ENCODE measurements at regions of chr18 and their contacts with region 1.

Region 1: DNA sequence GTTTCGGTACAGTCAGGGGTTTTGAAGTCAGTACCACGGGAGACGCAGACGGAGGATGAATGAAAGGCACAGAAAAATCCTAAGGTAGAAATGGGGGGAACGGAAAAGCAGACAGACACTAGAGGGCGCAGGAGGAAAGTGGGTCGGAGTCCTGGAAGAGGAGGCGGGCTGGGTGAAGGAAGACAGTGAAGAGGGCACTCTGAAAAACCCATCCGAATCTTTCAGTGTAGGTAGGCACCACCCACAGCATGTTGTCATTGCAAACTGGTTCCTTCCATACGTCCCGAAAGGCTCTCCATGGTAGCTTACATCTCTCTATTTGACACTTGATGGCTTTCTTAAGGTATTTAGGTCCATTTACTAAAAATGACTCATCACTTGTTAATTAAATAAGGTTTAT is 18.5 kb upstream of the ZNF236 start:
- DNase-seq: peak; percentile 82
- H3K4me3 ChIP-seq: no peak overlapping the region
- H3K27ac ChIP-seq: no peak overlapping the region
- H3K4me1 ChIP-seq: peaks cover 9% of the 10 kb centered on the region
- H3K27me3 ChIP-seq: no peaks in the 10 kb centered on the region
- CTCF ChIP-seq: peak; percentile 39 to 82 (median 56)
- POLR2A ChIP-seq: no peak

Region 2: DNA sequence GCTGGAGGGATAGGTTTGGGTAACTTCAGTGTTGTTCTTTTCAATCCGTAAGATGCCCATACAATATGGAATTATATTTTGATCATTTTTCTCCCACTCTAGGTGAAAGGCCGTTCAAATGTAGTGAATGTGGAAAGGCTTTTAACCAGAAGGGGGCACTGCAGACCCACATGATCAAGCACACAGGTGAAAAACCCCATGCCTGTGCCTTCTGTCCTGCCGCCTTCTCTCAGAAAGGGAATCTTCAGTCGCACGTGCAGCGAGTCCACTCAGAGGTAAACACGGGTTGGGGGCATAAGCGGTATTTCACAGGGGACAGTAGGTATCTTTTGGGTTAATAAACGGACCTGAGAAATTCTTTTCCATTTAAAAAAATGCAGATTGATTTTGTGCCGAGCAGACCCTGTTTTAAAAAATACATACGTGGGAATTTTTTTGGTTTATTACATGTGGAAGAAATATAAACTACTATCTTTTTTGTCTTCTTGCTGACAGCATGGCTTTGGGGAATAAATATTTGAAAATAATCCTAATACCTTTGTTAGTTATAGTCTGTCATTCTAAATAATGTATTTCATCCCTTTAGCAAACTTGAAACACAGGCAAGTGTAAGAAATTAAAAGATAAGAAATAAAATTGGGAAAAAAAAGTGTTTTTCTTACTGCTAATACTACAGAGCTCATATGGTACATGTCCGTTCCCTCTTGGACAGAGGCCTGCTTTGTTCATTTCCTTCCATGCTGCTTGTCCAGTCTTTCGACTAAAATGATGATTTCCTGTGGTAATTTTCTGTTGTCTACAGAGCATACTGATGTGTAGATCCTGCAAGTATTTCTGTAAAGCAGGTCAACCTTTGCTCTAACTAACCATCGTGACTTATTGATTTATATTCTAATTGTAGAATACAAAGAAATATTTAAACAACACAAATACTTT is 71.8 kb after region 1 on chr18:
- intact Hi-C with region 1: loop called (anchors 10 kb)
- DNase-seq: peak; percentile 67
- H3K4me3 ChIP-seq: no peak overlapping the region
- H3K27ac ChIP-seq: no peak overlapping the region
- H3K4me1 ChIP-seq: no peaks in the 10 kb centered on the region
- H3K27me3 ChIP-seq: no peaks in the 10 kb centered on the region
- CTCF ChIP-seq: peak in 2 of 3 experiments; percentile 47 to 54
- POLR2A ChIP-seq: no peak

Region 3: DNA sequence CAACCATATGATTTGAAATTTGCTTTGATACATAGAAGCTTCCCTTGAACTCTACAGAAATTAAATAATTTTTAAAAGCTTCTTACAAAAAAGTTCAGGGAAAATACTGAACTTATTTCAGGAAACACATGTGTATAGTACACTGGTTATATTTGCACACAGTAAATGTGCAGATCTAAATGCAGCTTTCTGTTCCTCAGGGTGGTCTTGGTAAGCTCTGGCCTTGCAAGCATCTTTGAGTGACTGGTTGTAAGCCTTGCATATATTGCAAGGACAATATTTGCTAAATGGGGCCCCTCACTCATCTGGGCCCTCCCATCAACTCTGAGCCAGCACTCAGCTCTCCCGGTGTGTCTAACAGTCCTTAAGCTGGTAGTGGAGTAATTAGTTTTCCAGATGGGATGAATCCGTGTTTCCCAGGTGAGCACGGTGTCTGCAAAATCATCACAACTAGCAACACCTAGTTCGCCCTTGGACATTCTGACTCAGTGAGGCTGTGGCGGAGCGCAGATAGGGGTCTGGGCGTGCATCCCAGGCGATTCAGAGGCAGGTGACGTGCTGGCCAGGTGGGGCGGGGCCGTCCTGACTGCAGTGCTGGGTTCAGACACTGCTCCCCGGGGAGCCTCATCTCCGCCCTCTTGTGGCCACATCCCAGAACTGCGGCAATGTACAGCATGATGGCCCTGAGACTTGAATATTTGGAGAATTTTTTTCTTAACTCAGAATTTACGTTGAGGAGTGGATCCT is 179.2 kb after region 1 on chr18:
- intact Hi-C with region 1: loop called (anchors 10 kb)
- DNase-seq: peak; percentile 89
- H3K4me3 ChIP-seq: no peak overlapping the region
- H3K27ac ChIP-seq: no peak overlapping the region
- H3K4me1 ChIP-seq: no peaks in the 10 kb centered on the region
- H3K27me3 ChIP-seq: no peaks in the 10 kb centered on the region
- CTCF ChIP-seq: peak; percentile 80 to 93 (median 84)
- POLR2A ChIP-seq: no peak